Right ventricle myocardium inferior (tissue), 1 donor: ENCODE measurements at regions of chr10 and their contacts with region 1.

Region 1: GRCh38 chr10:32980558-32981468 is 22.8 kb upstream of the ITGB1 start:
- DNase-seq: peak; percentile 95
- ATAC-seq: peak; percentile 96

Region 2: GRCh38 chr10:32958085-32959005 is 22.5 kb before region 1 on chr10 and contains the start of gene ITGB1:
- intact Hi-C with region 1: loop called (anchors 1 kb)
- DNase-seq: peak; percentile 98
- ATAC-seq: peak; percentile 97
- total RNA-seq, gene ITGB1: 583 TPM

Region 3: DNA sequence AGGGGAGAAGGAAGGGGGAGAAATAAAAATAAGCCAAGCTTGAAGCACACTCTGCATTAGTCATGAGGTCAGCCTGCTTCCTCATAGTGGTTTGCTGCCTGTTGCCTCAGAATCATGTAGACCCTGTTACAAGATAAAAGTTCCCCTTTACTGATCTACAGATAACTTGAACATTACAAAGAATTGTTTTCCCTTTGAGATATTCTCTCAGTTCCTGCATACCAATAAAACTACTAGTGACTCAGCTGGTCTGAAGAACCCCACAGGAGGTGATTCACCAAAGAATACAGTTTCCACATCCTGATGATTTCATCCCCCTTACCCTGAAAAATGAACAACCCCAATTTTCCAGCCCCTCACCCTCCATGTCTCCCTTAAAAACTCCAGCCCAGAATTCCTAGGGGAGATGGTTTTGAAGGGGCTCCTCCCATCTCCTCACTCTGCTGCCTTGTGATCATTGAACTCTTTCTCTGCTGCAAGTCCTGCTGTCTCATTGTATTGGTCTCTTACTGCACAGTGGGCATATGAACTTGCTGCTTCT is 385.1 kb after region 1 on chr10:
- intact Hi-C with region 1: no loop called
- DNase-seq: no peak
- ATAC-seq: no peak